ENCODE measurements at regions of chr15 and their contacts with region 1.

Region 1: DNA sequence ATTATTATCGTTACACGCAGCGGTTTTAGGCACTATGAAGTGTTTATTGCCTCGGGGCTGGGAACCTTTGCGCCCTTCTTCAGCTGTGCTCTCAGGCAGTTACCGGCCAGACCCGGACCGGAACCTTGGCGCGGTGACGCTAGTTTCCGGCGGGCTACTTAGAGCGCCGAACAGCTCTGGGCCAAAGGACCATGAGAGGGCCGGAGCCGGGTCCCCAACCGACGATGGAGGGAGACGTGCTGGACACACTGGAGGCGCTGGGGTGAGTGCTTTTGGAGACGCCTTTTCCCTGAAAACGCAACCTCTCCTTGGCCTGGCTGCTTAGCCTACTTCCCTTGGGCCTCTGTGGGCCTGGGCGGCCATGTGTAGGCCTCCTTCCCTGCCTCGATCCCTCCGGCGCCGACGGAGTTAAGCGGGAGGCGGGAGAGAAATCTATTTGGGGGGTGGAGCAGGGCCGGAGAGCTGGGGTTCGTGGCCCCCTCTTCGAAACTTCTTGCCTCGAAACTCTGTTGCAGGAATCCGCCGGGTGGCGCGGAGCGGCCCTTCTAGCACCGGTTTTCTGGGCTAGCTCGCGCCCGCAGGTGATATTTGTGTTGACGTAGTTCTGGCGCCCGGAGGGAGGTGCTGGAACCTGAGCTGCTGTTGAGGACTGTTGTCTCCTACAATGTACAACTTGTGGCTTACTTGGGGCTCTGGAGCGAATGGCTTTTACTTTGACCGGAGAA is at the start of gene FAM98B:
- DNase-seq: peak; percentile 36
- H3K4me3 ChIP-seq: peak within 1 kb of the TSS; percentile 84
- H3K27me3 ChIP-seq: 0 out of 2 replicates have a peak, but pooled peaks cover 2% of the 10 kb centered on the region
- CTCF ChIP-seq: peak; percentile 14; the same call in 1 of the 2 replicates
- polyA plus RNA-seq, gene FAM98B: 4.9 and 8.1 TPM in 2 replicates

Region 2: GRCh38 chr15:38690689-38691332 is 236.7 kb after region 1 on chr15:
- CTCF ChIA-PET with region 1: interaction called, 18 read pairs
- POLR2A ChIA-PET with region 1: no interaction called
- DNase-seq: no peak
- H3K4me3 ChIP-seq: no peak overlapping the region
- H3K27me3 ChIP-seq: no peaks in the 10 kb centered on the region
- CTCF ChIP-seq: peak; percentile 80

Region 3: GRCh38 chr15:38699633-38700230 is 245.6 kb after region 1 on chr15:
- CTCF ChIA-PET with region 1: interaction called, 15 read pairs
- POLR2A ChIA-PET with region 1: no interaction called
- DNase-seq: no peak
- H3K4me3 ChIP-seq: no peak overlapping the region
- H3K27me3 ChIP-seq: no peaks in the 10 kb centered on the region
- CTCF ChIP-seq: peak; percentile 90

Measured in BJ (cell line).